Calu3 (cell line): ENCODE measurements at regions of chr16 and their contacts with region 1.

Region 1: DNA sequence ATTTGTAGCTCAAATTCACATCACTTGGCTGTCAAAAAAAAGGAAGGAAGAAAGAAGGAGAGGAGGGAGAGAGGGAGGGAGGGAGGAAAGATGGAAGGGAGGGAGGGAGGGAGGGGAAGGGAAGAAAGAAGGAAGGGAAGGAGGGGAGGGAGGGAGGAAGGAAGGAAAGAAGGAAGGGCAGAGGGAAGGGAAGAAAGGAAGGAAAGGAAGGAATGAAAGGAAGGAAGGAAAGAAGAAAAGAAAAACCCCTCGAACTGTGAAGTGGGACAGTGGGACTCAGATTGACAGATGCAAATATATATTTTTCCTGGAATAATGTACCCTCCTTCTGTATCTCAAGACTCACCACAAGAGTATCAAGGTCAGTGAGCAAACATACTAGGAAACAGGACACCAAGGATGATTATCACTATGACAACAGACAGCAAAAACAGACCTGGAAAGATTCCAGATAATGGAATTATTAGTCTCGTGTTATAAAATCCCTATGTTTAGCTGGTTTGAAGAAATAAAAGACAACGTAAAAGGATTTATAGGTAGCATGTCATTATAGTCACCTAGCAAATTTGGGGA is 24.2 kb upstream of the ABCA3 start:
- DNase-seq: no peak
- H3K4me3 Mint-ChIP-seq: no peak overlapping the region
- H3K27ac Mint-ChIP-seq: no peak overlapping the region
- H3K4me1 Mint-ChIP-seq: no peaks in the 10 kb centered on the region
- H3K27me3 Mint-ChIP-seq: peaks cover 92% of the 10 kb centered on the region
- CTCF ChIP-seq: no peak

Region 2: GRCh38 chr16:2267913-2268666 is 96.6 kb before region 1 on chr16 and contains the start of gene RNPS1:
- CTCF ChIA-PET with region 1: no interaction called
- intact Hi-C with region 1: no loop called
- DNase-seq: peak; percentile 98
- H3K4me3 Mint-ChIP-seq: peak within 1 kb of the TSS; percentile 100
- H3K27ac Mint-ChIP-seq: peak within 1 kb of the TSS; percentile 100
- H3K4me1 Mint-ChIP-seq: peaks cover 33% of the 10 kb centered on the region
- H3K27me3 Mint-ChIP-seq: no peaks in the 10 kb centered on the region
- CTCF ChIP-seq: no peak
- total RNA-seq, gene RNPS1: 287 and 301 TPM in 2 replicates

Region 3: GRCh38 chr16:2784951-2785635 is 420.4 kb after region 1 on chr16:
- CTCF ChIA-PET with region 1: interaction called, 10 read pairs
- intact Hi-C with region 1: no loop called
- DNase-seq: peak; percentile 41
- H3K4me3 Mint-ChIP-seq: peak overlapping the region; percentile 71
- H3K27ac Mint-ChIP-seq: peak overlapping the region; percentile 91
- H3K4me1 Mint-ChIP-seq: peaks cover 36% of the 10 kb centered on the region
- H3K27me3 Mint-ChIP-seq: no peaks in the 10 kb centered on the region
- CTCF ChIP-seq: no peak